Sigmoid colon (tissue), 7 donors: ENCODE measurements at regions of chr18 and their contacts with region 1.

Region 1: DNA sequence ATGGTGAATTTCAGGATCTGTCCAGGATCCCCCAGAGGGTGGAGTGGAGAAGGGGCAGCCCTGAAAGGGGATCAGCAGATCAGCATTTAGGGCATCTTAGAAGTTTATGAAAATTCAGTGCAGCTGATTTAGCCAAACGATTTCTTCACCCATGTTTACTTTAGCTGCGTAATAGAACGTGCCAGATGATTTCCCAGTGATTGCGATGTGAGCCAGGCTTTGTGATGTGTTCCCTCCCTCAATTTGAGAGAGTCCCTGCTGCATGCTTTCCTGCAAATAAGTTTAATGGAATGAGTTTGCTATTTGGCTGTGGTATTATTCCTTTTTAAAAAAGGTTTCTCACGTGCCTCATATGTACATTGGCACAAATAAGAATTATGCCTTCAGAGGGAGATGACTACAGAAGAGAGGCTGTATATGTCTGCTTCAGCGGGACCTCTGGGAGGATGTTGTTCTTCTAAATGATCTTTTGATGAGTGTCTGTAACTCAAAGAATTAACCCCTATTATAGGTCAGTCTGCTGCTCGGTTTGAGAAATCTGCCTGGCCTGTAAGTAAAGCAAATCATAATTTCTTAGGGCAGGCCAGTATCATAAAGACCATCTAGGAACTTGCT is 111.9 kb downstream of the MRO start:
- DNase-seq: no peak
- H3K4me3 ChIP-seq: no peak overlapping the region
- H3K27ac ChIP-seq: peak overlapping the region in 2 of 4 donors; percentile 13 to 58
- H3K4me1 ChIP-seq: peaks cover 0 to 15% (median 2%) of the 10 kb centered on the region in 4 donors
- H3K27me3 ChIP-seq: no peaks in the 10 kb centered on the region
- CTCF ChIP-seq: no peak
- EP300 ChIP-seq: peak in 1 of 4 donors; percentile 32
- POLR2A ChIP-seq: no peak

Region 2: GRCh38 chr18:50507120-50507590 is 200.8 kb before region 1 on chr18:
- intact Hi-C with region 1: loop called (anchors 5 kb)
- DNase-seq: peak; percentile 72
- H3K4me3 ChIP-seq: no peak overlapping the region
- H3K27ac ChIP-seq: no peak overlapping the region
- H3K4me1 ChIP-seq: peaks cover 0 to 4% (median 3%) of the 10 kb centered on the region in 4 donors
- H3K27me3 ChIP-seq: no peaks in the 10 kb centered on the region
- CTCF ChIP-seq: peak in 3 of 4 experiments; percentile 52 to 70 (median 68)
- EP300 ChIP-seq: no peak
- POLR2A ChIP-seq: no peak

Region 3: GRCh38 chr18:50559752-50560680 is 147.9 kb before region 1 on chr18 and contains the start of gene MAPK4:
- intact Hi-C with region 1: loop called (anchors 5 kb)
- DNase-seq: peak; percentile 71
- H3K4me3 ChIP-seq: peak within 1 kb of the TSS; percentile 62 to 79 (median 67)
- H3K27ac ChIP-seq: peak within 1 kb of the TSS; percentile 75 to 86 (median 82)
- H3K4me1 ChIP-seq: peaks cover 0 to 23% (median 18%) of the 10 kb centered on the region in 4 donors
- H3K27me3 ChIP-seq: peaks cover 0 to 4% (median 0%) of the 10 kb centered on the region in 3 donors
- CTCF ChIP-seq: no peak
- EP300 ChIP-seq: no peak
- POLR2A ChIP-seq: no peak
- total RNA-seq, gene MAPK4: 6.8 to 16.1 (median 12.9) TPM

Region 4: GRCh38 chr18:50614838-50615237 is 93.1 kb before region 1 on chr18:
- intact Hi-C with region 1: loop called (anchors 5 kb)
- DNase-seq: no peak
- H3K4me3 ChIP-seq: no peak overlapping the region
- H3K27ac ChIP-seq: no peak overlapping the region
- H3K4me1 ChIP-seq: peaks cover 0 to 6% (median 5%) of the 10 kb centered on the region in 4 donors
- H3K27me3 ChIP-seq: no peaks in the 10 kb centered on the region
- CTCF ChIP-seq: no peak
- EP300 ChIP-seq: no peak
- POLR2A ChIP-seq: no peak

Region 5: GRCh38 chr18:50665519-50665918 is 42.4 kb before region 1 on chr18:
- intact Hi-C with region 1: loop called (anchors 5 kb)
- DNase-seq: no peak
- H3K4me3 ChIP-seq: no peak overlapping the region
- H3K27ac ChIP-seq: no peak overlapping the region
- H3K4me1 ChIP-seq: peaks cover 0 to 5% (median 0%) of the 10 kb centered on the region in 4 donors
- H3K27me3 ChIP-seq: no peaks in the 10 kb centered on the region
- CTCF ChIP-seq: no peak
- EP300 ChIP-seq: no peak
- POLR2A ChIP-seq: no peak

Region 6: GRCh38 chr18:50751490-50751889 is 43.5 kb after region 1 on chr18:
- intact Hi-C with region 1: loop called (anchors 10 kb)
- DNase-seq: no peak
- H3K4me3 ChIP-seq: no peak overlapping the region
- H3K27ac ChIP-seq: no peak overlapping the region
- H3K4me1 ChIP-seq: no peaks in the 10 kb centered on the region
- H3K27me3 ChIP-seq: no peaks in the 10 kb centered on the region
- CTCF ChIP-seq: no peak
- EP300 ChIP-seq: no peak
- POLR2A ChIP-seq: no peak

Region 7: DNA sequence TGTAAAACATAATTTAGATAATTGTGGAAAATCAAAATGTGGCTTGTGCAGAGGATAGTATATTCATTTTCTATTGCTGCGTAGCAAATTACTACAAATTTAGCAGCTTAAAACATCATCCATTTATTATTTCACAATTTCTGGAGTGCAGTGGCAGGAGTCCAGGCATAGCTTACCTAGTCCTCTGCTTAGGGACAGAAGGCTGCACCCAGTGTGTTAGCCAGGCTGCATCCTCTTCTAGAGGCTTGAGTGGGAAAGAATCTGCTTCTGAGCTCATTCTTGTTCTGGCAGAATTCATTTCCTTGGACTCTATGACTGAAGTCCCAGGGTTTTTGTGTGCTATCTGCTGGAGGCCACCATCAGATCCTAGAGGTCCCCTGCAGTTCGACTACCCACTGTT is 72.2 kb after region 1 on chr18:
- intact Hi-C with region 1: loop called (anchors 5 kb)
- DNase-seq: no peak
- H3K4me3 ChIP-seq: no peak overlapping the region
- H3K27ac ChIP-seq: no peak overlapping the region
- H3K4me1 ChIP-seq: peaks cover 0 to 6% (median 0%) of the 10 kb centered on the region in 4 donors
- H3K27me3 ChIP-seq: no peaks in the 10 kb centered on the region
- CTCF ChIP-seq: no peak
- EP300 ChIP-seq: no peak
- POLR2A ChIP-seq: no peak